ENCODE measurements at regions of chr11 and their contacts with region 1.

Region 1: GRCh38 chr11:10899121-10899830 is 41.4 kb upstream of the ZBED5 start:
- DNase-seq: peak; percentile 85
- H3K4me3 ChIP-seq: no peak overlapping the region
- H3K27ac ChIP-seq: peak overlapping the region; percentile 84 to 94 (median 92)
- H3K4me1 ChIP-seq: peaks cover 0 to 49% (median 38%) of the 10 kb centered on the region in 4 donors
- H3K27me3 ChIP-seq: no peaks in the 10 kb centered on the region
- CTCF ChIP-seq: no peak
- EP300 ChIP-seq: no peak
- POLR2A ChIP-seq: no peak

Region 2: DNA sequence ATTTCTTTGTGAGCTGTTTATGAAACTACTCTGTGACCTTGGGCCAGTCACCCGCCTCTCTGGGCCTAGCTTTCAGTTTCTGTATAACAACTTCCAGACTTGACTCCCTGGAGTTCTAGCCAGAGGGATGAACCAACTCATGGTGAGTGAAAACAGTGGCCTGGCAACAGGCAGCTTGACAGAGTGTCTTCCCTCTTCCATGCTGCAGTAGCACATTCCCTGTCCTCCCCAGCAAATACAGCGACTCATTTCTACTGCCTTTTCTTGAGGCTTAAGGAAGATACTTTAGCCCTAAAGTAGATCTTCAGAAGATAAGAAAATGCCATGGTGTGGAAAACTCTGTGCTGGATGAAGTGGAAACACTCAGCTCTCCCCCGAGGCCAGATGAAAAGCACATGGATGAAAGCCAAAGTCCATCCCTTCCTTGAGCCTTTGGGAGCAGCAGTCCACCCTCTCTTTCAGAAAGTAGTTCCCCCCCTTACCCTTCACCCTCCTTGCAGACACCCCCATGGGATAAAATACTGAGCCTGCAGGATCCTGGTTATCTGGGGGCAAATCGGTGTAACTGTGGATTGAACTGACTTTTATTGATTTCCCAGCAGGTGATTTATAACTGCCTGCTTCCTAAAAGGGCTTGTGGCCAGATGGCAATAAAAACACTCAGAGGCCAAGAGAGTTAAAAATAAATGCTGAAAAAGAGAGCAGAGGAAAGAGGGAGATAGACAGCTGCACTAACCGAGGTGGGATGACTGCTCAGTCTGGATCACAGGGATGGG is 229.8 kb before region 1 on chr11:
- intact Hi-C with region 1: no loop called
- DNase-seq: peak; percentile 79
- H3K4me3 ChIP-seq: no peak overlapping the region
- H3K27ac ChIP-seq: peak overlapping the region; percentile 75 to 89 (median 84)
- H3K4me1 ChIP-seq: peaks cover 0 to 92% (median 88%) of the 10 kb centered on the region in 4 donors
- H3K27me3 ChIP-seq: no peaks in the 10 kb centered on the region
- CTCF ChIP-seq: no peak
- EP300 ChIP-seq: no peak
- POLR2A ChIP-seq: no peak

Region 3: GRCh38 chr11:10808553-10809372 is 90.5 kb before region 1 on chr11 and contains the start of gene EIF4G2:
- intact Hi-C with region 1: loop called (anchors 2 kb)
- DNase-seq: peak; percentile 99
- H3K4me3 ChIP-seq: peak within 1 kb of the TSS; percentile 83 to 99 (median 94)
- H3K27ac ChIP-seq: peak within 1 kb of the TSS; percentile 97 to 100 (median 98)
- H3K4me1 ChIP-seq: peaks cover 0 to 43% (median 39%) of the 10 kb centered on the region in 4 donors
- H3K27me3 ChIP-seq: no peaks in the 10 kb centered on the region
- CTCF ChIP-seq: no peak
- EP300 ChIP-seq: peak in 1 of 4 donors; percentile 27
- POLR2A ChIP-seq: peak; percentile 98 to 99
- total RNA-seq, gene EIF4G2: 425 to 581 (median 497) TPM

Region 4: DNA sequence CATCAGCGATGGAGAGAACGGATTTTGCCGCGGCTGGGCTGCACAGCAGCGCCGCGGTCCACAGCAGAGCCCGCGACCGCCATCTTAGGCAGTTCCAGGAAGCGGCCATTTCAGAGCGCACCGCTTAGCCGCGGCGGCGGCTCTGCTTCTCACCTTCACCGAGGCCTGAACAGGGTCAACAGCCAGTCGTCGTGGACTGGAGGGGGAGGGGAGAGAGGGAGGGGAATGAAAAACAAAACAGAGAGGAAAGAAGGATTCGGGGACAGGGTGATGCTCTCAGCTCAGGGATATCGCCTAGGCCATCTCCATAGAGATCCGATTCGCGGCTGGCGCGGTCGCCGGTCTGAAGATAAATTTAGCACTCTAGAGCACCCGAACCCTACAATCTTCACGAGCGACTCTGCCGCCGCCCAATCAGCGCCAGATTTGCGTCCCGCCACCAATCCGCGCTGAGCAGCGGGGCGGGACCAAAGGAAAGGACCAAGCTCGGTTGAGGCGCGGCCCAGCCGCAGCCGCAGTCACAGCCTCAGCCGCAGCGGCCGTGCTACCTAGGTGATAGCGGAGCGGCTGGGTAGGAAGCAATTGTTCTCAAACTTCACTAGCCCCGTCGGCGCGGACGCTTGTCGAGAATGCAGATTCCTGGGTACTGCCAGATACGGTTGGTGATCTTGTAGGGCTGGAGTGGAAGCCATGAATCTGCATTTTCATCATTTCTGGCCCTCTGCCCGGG is 41.4 kb before region 1 on chr11 and contains the start of gene ZBED5:
- intact Hi-C with region 1: loop called (anchors 2 kb)
- DNase-seq: peak; percentile 99
- H3K4me3 ChIP-seq: peak within 1 kb of the TSS; percentile 66 to 83 (median 72)
- H3K27ac ChIP-seq: peak within 1 kb of the TSS; percentile 96 to 99 (median 96)
- H3K4me1 ChIP-seq: peaks cover 0 to 52% (median 30%) of the 10 kb centered on the region in 4 donors
- H3K27me3 ChIP-seq: no peaks in the 10 kb centered on the region
- CTCF ChIP-seq: peak in 1 of 4 experiments; percentile 23
- EP300 ChIP-seq: no peak
- POLR2A ChIP-seq: peak; percentile 97 to 99
- total RNA-seq, gene ZBED5: 34.9 to 51.7 (median 42.6) TPM

Region 5: DNA sequence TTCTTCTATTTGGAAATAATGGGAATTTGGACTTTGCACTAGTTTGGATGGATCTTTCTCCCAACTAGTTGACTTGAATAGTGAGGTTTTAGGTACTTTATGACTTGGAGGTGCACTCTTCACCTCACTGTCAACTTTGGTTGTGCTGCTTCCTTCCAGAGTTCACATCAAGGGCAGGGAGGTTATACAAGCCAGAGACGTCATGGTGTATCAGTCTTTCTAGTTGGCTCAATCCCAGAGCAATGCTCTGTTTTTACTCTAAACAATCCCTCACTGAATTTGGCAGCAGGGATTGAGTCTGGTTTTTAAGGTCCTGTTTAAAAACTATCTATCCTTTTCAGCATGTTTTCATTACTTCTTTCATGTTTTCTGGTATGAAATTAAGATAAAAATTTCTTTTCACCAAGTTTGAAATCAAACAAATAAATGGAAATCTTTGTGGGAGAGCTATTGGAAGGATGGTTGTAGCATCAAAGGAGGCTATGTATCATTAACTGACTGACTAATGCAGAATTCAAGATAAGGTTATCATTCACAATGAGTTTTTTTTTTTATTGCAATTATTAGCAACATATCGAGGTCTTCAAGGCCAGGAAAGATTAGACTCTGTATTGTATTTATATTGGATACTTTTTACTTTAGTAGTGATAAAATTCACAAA is 13.4 kb before region 1 on chr11:
- intact Hi-C with region 1: loop called (anchors 2 kb)
- DNase-seq: no peak
- H3K4me3 ChIP-seq: no peak overlapping the region
- H3K27ac ChIP-seq: peak overlapping the region in 3 of 4 donors; percentile 29 to 71 (median 58)
- H3K4me1 ChIP-seq: peaks cover 0 to 32% (median 19%) of the 10 kb centered on the region in 4 donors
- H3K27me3 ChIP-seq: no peaks in the 10 kb centered on the region
- CTCF ChIP-seq: no peak
- EP300 ChIP-seq: peak in 3 of 4 donors; percentile 5 to 64 (median 34)
- POLR2A ChIP-seq: no peak

Measured in sigmoid colon (tissue), 7 donors.